GM12878 (cell line): ENCODE measurements at regions of chr9 and their contacts with region 1.

Region 1: GRCh38 chr9:126490871-126491567 is 122.7 kb upstream of the LMX1B start:
- DNase-seq: no peak
- ATAC-seq: peak; percentile 73
- H3K4me3 ChIP-seq: no peak overlapping the region
- H3K27ac ChIP-seq: no peak overlapping the region
- H3K4me1 ChIP-seq: no peaks in the 10 kb centered on the region
- H3K27me3 ChIP-seq: peaks cover 0 to 2% of the 10 kb centered on the region in 2 experiments; a peak in 3 of 4 replicates
- CTCF ChIP-seq: peak; percentile 81 to 91 (median 85)
- EP300 ChIP-seq: no peak
- POLR2A ChIP-seq: no peak
- RAD21 ChIP-seq: peak; percentile 96

Region 2: DNA sequence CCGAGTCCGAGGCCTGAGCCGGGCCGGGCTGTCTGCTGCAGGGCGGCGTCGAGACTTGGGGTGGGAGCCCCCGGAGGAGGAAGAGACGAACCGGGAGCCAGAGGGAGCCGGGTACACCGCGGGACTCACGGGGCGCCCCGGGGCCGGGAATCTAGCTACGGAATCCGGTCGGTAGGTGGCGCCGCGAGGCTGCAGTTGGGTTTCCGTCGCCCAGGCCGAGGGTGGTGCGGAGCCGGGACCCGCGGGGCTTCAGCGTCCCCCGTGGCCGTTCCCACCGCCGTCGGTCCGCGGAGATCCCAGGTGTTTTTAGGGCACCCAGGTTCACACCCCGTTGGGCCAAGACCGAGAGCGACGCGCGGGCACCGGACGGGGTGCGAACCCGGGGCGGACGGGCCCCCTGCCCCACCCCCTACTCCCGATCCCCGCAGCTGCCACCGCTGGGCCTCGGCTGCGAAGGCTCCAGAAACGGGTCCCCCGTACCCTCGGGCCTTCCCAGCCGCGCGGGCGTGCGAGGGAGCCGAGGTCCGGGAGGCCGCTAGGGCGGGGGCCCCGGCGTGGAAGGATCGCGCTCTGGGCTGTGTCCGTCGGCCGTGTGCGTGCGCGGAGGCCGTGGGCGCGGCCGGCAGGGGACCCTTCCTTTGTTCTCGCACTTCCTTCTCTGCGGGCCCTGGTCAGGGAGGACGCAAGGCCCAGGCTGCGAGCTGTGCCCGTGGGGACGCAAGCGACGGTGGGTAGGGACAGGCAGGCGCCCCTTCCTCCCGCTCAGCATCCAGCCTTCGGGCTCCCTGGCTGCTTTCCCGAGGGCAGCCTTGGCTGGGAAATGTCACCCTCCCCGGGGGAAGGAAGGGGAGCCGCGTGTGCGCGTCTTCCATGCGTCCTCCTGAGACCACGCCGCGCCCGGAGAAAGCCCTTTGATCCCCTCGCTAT is 1082.8 kb before region 1 on chr9:
- CTCF ChIA-PET with region 1: interaction called, 31 read pairs
- POLR2A ChIA-PET with region 1: no interaction called
- RAD21 ChIA-PET with region 1: interaction called, 11 read pairs
- SMC1A ChIA-PET with region 1: interaction called, 14 read pairs
- in situ Hi-C with region 1: no loop called
- intact Hi-C with region 1: loop called (anchors 5 kb)
- DNase-seq: no peak
- ATAC-seq: peak; percentile 93
- H3K4me3 ChIP-seq: peak overlapping the region; percentile 70; the same call in 1 of the 2 replicates
- H3K27ac ChIP-seq: no peak overlapping the region
- H3K4me1 ChIP-seq: peaks cover 10% of the 10 kb centered on the region
- H3K27me3 ChIP-seq: no peaks in the 10 kb centered on the region
- CTCF ChIP-seq: peak; percentile 75 to 95 (median 87); a peak in 5 of 6 replicates
- EP300 ChIP-seq: no peak
- POLR2A ChIP-seq: peak; percentile 27; the same call in 1 of the 2 replicates
- RAD21 ChIP-seq: peak; percentile 87

Region 3: GRCh38 chr9:126228781-126229444 is 262.1 kb before region 1 on chr9:
- CTCF ChIA-PET with region 1: no interaction called
- POLR2A ChIA-PET with region 1: no interaction called
- RAD21 ChIA-PET with region 1: no interaction called
- SMC1A ChIA-PET with region 1: interaction called, 3 read pairs
- in situ Hi-C with region 1: no loop called
- intact Hi-C with region 1: loop called (anchors 1 kb)
- DNase-seq: no peak
- ATAC-seq: peak; percentile 97
- H3K4me3 ChIP-seq: no peak overlapping the region
- H3K27ac ChIP-seq: no peak overlapping the region
- H3K4me1 ChIP-seq: no peaks in the 10 kb centered on the region
- H3K27me3 ChIP-seq: peaks cover 0 to 2% of the 10 kb centered on the region in 2 experiments; a peak in 1 of 4 replicates
- CTCF ChIP-seq: peak; percentile 92 to 95 (median 94)
- EP300 ChIP-seq: no peak
- POLR2A ChIP-seq: no peak
- RAD21 ChIP-seq: peak; percentile 87

Region 4: DNA sequence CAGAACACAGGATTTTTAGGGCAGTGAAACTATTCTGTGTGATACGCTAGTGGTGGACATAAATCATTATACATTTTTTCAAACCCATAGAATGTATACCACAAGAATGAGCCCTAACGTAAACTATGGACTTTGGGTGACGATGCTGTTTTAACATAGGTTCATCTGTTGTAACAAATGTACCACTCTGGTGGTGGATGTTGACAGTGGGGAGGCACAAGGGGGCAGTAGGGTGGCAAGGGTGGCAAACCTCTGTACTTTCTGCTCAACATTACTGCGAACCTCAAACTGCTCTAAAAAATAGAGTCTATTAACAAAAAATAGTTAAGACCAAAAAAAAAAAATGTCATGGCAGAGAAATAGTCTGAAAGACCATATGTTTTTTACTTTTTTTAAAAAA is 173.5 kb before region 1 on chr9:
- CTCF ChIA-PET with region 1: interaction called, 11 read pairs
- POLR2A ChIA-PET with region 1: no interaction called
- RAD21 ChIA-PET with region 1: no interaction called
- SMC1A ChIA-PET with region 1: interaction called, 4 read pairs
- in situ Hi-C with region 1: no loop called
- intact Hi-C with region 1: no loop called
- DNase-seq: no peak
- ATAC-seq: no peak
- H3K4me3 ChIP-seq: no peak overlapping the region
- H3K27ac ChIP-seq: no peak overlapping the region
- H3K4me1 ChIP-seq: no peaks in the 10 kb centered on the region
- H3K27me3 ChIP-seq: no peaks in the 10 kb centered on the region
- CTCF ChIP-seq: peak in 1 of 3 experiments; percentile 14; a peak in 1 of 6 replicates
- EP300 ChIP-seq: no peak
- POLR2A ChIP-seq: no peak
- RAD21 ChIP-seq: no peak

Region 5: DNA sequence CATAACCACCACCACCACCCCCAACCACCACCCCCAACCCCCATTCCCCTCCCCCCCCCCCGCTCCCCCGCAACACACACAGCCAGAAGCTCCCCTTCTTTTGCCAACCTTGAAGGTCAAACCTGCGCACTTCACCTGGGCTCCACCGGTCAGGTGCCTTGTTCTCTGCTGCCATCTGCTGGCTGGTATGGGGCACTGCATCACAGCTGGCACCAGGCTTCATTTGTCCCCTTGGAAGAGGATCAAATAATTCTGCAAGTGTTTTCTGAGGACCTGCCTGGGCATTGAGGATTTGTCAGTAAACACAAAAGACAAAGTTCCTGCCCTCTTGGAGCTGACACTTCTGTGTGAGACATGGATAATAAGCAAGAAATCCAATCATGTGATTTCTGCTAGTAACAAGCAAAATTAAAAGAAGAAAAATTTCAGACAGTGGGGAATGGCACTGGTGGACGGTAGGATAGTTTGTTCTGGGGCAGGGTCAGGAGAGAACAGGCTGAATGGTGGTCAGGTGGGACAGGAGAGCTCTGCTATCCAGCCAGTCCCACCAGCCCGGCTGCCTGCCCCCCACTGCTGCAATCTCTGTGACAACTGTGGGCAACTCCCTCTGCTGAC is 67.1 kb after region 1 on chr9:
- CTCF ChIA-PET with region 1: interaction called, 12 read pairs
- POLR2A ChIA-PET with region 1: no interaction called
- RAD21 ChIA-PET with region 1: interaction called, 3 read pairs
- SMC1A ChIA-PET with region 1: interaction called, 3 read pairs
- in situ Hi-C with region 1: no loop called
- intact Hi-C with region 1: no loop called
- DNase-seq: peak; percentile 27
- ATAC-seq: peak; percentile 88
- H3K4me3 ChIP-seq: no peak overlapping the region
- H3K27ac ChIP-seq: no peak overlapping the region
- H3K4me1 ChIP-seq: no peaks in the 10 kb centered on the region
- H3K27me3 ChIP-seq: no peaks in the 10 kb centered on the region; a peak in 1 of 4 replicates
- CTCF ChIP-seq: peak; percentile 93 to 99 (median 98)
- EP300 ChIP-seq: no peak
- POLR2A ChIP-seq: no peak
- RAD21 ChIP-seq: peak; percentile 98